B cell (primary cell): ENCODE measurements at regions of chr20 and their contacts with region 1.

Region 1: DNA sequence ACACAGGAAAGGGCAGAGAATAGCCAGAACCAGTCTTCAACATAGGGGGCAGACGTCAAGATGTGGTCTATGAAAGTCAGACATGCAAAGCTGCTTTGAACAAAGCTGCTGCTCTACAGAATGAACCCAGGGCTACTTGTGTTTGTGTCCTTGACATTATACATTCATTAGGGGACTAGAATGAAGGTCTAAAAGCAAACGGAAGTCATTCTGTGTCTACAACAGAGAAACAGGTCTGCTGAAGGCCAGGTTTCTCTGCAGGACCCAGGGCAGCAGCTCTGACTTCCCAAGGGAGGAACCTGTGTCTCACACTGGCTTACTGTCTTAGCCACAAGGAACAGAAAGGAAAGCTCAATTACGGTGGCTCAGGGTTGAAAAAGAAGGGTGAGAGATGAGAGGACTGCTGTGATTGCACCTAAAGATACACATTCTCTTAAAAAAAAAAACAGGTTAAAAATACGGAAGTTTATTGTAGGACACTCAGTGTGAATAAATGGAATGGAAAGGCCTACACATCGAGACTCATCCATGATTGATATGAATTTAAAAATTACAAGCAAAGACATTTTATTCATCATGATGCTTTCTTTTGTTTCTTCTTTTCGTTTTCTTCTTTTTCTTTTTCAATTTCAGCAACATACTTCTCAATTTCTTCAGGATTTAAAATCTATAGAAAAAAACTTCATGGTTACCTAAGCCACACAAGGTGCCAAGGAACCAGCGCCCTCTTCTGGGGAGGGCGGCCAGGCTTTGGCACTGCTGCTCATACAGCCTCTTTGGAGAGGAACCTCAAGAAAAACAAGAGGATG is 6.7 kb downstream of the PSMA7 start:
- DNase-seq: peak; percentile 80
- ATAC-seq: peak; percentile 81
- H3K4me3 ChIP-seq: no peak overlapping the region
- H3K4me3 Mint-ChIP-seq: no peak overlapping the region
- H3K27ac ChIP-seq: peak overlapping the region in 1 of 2 donors; percentile 25
- H3K27ac Mint-ChIP-seq: peak overlapping the region; percentile 63
- H3K4me1 ChIP-seq: peaks cover 9 to 24% of the 10 kb centered on the region in 2 donors
- H3K4me1 Mint-ChIP-seq: peaks cover 32% of the 10 kb centered on the region
- H3K27me3 ChIP-seq: no peaks in the 10 kb centered on the region
- H3K27me3 Mint-ChIP-seq: no peaks in the 10 kb centered on the region
- CTCF ChIP-seq: peak; percentile 86

Region 2: GRCh38 chr20:62025832-62026563 is 110.5 kb before region 1 on chr20:
- CTCF ChIA-PET with region 1: interaction called, 6 read pairs
- POLR2A ChIA-PET with region 1: no interaction called
- intact Hi-C with region 1: loop called (anchors 5 kb)
- DNase-seq: peak; percentile 24
- ATAC-seq: no peak
- H3K4me3 ChIP-seq: no peak overlapping the region
- H3K4me3 Mint-ChIP-seq: no peak overlapping the region
- H3K27ac ChIP-seq: no peak overlapping the region
- H3K27ac Mint-ChIP-seq: peak overlapping the region; percentile 56
- H3K4me1 ChIP-seq: peaks cover 17 to 26% of the 10 kb centered on the region in 2 donors
- H3K4me1 Mint-ChIP-seq: peaks cover 51% of the 10 kb centered on the region
- H3K27me3 ChIP-seq: no peaks in the 10 kb centered on the region
- H3K27me3 Mint-ChIP-seq: no peaks in the 10 kb centered on the region
- CTCF ChIP-seq: no peak

Region 3: DNA sequence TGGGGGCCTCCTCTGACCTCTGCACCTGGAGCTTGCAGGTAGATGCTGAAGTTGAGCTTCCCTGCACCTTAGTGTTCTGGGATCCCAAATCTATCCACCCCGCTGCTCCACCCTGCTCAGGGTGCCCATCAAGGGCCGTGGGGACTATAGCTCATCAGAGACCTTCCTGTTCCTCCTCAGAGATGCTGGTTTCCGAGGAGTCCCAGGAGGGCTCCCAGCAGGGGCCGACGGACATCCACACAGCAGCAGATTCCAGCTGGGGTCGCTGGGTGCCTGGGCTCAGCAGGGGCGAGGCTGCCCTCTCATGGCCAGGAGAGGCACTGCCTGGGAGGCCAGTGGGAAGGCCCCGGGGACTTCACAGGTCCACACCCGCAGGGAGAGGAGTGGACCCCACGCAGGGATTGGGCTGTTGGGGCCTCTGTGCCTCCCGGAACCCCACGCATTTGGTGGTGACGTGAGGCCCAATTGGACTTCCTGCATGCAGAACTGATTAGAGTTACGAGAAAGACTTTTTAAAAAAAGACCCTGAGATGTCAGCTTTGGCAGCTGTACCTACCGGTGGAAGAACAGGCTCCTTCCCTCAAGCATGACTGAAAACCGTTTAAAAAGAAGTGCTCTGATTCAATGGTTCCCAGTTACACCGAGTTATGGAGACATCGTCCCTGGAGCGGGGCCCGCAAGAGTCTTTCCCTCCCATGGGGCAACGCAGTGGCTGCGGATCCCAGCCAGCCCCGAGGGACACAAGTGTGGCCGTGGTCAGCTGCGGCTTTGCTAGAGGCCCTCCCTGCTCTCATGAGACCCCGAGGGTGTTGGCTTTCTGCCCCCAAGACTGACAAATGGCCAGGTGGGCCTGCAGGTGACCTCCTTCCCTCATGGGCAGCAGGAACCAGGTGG is 480.5 kb after region 1 on chr20:
- CTCF ChIA-PET with region 1: no interaction called
- POLR2A ChIA-PET with region 1: no interaction called
- intact Hi-C with region 1: no loop called
- DNase-seq: peak; percentile 81
- ATAC-seq: peak; percentile 71
- H3K4me3 ChIP-seq: no peak overlapping the region
- H3K4me3 Mint-ChIP-seq: peak overlapping the region; percentile 83
- H3K27ac ChIP-seq: peak overlapping the region; percentile 54 to 73
- H3K27ac Mint-ChIP-seq: peak overlapping the region; percentile 94
- H3K4me1 ChIP-seq: peaks cover 31 to 33% of the 10 kb centered on the region in 2 donors
- H3K4me1 Mint-ChIP-seq: peaks cover 41% of the 10 kb centered on the region
- H3K27me3 ChIP-seq: no peaks in the 10 kb centered on the region
- H3K27me3 Mint-ChIP-seq: no peaks in the 10 kb centered on the region
- CTCF ChIP-seq: peak; percentile 92